ENCODE measurements at regions of chr17 and their contacts with region 1.

Region 1: DNA sequence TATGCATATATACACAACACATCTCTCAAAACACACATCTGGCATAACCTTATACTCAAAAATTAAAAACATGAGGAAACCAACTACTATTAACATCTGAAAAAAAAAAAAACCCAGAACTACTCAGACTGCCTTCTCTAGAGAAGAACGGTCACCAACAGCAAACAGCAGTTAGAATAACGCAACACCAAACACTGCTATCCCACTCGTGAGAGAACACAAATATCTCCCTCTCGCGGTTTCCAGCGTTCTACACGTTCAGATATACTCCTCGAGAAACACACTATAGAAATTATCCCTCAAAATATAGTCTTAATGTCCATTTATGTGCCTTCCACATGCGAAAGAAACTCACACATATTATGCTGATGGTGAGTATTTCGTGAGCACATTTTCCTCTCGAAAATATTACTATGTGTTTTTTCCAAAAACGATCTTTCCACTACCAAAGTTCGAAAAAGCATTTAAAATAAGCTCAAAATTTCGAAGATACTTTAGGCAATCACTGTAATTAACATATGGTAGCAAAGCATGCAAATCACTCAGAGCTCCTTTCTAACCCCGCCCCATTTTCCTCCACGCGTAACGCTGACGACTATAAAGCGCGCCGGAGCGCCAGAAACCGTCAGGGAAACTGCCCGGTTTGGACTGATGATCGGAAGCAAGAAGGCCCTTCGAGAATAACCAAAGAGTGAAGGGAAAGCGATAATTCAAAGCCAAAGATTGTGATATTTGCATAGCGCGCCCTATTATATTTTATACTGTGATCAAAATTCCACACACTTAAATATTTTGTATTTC is 60.1 kb downstream of the TEX14 start:
- DNase-seq: peak; percentile 98
- H3K4me3 ChIP-seq: peak overlapping the region; percentile 68
- H3K27ac ChIP-seq: peak overlapping the region; percentile 83
- H3K4me1 ChIP-seq: peaks cover 17% of the 10 kb centered on the region
- CTCF ChIP-seq: peak; percentile 41

Region 2: GRCh38 chr17:58517734-58518609 is 113.8 kb before region 1 on chr17:
- CTCF ChIA-PET with region 1: no interaction called
- POLR2A ChIA-PET with region 1: interaction called, 22 read pairs
- intact Hi-C with region 1: loop called (anchors 1 kb)
- DNase-seq: peak; percentile 100
- H3K4me3 ChIP-seq: peak overlapping the region; percentile 86
- H3K27ac ChIP-seq: peak overlapping the region; percentile 88
- H3K4me1 ChIP-seq: peaks cover 58% of the 10 kb centered on the region
- CTCF ChIP-seq: no peak

Region 3: GRCh38 chr17:58580628-58581027 is 51.1 kb before region 1 on chr17:
- CTCF ChIA-PET with region 1: no interaction called
- POLR2A ChIA-PET with region 1: interaction called, 10 read pairs
- intact Hi-C with region 1: no loop called
- DNase-seq: no peak
- H3K4me3 ChIP-seq: no peak overlapping the region
- H3K27ac ChIP-seq: no peak overlapping the region
- H3K4me1 ChIP-seq: peaks cover 3% of the 10 kb centered on the region
- CTCF ChIP-seq: no peak

Region 4: GRCh38 chr17:58611758-58612157 is 20.0 kb before region 1 on chr17:
- CTCF ChIA-PET with region 1: no interaction called
- POLR2A ChIA-PET with region 1: interaction called, 13 read pairs
- intact Hi-C with region 1: no loop called
- DNase-seq: no peak
- H3K4me3 ChIP-seq: no peak overlapping the region
- H3K27ac ChIP-seq: no peak overlapping the region
- H3K4me1 ChIP-seq: no peaks in the 10 kb centered on the region
- CTCF ChIP-seq: no peak

Region 5: DNA sequence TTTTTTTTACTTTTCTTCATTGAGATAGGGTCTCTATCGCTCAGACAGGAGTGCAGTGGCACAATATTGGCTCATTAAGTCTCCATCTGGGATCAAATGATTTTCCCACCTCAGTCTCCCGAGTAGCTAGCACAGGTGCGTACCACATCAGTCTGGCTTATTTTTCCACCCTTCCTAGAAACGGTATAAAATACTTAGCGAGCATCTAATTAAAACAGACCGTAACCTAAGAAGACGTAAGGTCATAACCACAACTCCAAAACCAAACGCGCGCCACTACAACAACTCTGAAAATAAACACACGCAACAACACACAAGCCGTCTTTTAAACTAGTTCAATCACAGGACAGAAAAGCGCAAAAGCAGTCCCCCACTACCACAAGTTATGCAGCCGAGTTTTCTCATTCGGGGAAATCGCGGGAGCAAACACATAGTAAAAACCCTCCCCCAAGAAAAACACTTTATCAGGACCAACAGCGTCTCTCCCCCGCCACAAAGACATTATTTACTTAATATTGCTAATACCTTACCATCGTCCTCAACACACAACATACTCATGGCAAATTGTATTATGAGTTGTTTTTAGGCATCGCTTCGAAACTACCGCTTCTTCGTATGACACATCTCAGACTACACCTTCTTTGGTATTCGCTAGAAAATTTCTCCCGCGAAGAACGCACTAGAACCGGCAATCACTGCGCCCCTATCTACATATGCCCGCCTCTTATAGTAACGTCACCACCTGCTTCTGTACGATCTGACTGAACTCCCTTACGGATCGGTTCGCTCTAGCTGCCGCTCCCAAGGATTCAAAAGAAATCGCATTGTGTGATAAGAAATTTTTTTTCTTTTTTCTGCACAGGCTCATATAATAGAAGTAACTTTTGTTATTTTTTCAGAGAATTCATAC is 27.3 kb after region 1 on chr17:
- CTCF ChIA-PET with region 1: no interaction called
- POLR2A ChIA-PET with region 1: interaction called, 64 read pairs
- intact Hi-C with region 1: loop called (anchors 1 kb)
- DNase-seq: peak; percentile 92
- H3K4me3 ChIP-seq: peak overlapping the region; percentile 65
- H3K27ac ChIP-seq: peak overlapping the region; percentile 74
- H3K4me1 ChIP-seq: peaks cover 6% of the 10 kb centered on the region
- CTCF ChIP-seq: no peak; the same call in 1 of the 2 replicates

Region 6: GRCh38 chr17:59004338-59005111 is 372.8 kb after region 1 on chr17:
- CTCF ChIA-PET with region 1: no interaction called
- POLR2A ChIA-PET with region 1: interaction called, 10 read pairs
- intact Hi-C with region 1: no loop called
- DNase-seq: peak; percentile 70
- H3K4me3 ChIP-seq: no peak overlapping the region
- H3K27ac ChIP-seq: peak overlapping the region; percentile 32
- H3K4me1 ChIP-seq: peaks cover 40% of the 10 kb centered on the region
- CTCF ChIP-seq: peak; percentile 98

Measured in OCI-LY7 (cell line).